Calu3 (cell line): ENCODE measurements at regions of chr2 and their contacts with region 1.

Region 1: GRCh38 chr2:16553226-16553625 is 112.4 kb downstream of the CYRIA start:
- DNase-seq: peak; percentile 49
- H3K4me3 Mint-ChIP-seq: no peak overlapping the region
- H3K27ac Mint-ChIP-seq: no peak overlapping the region
- H3K4me1 Mint-ChIP-seq: no peaks in the 10 kb centered on the region
- H3K27me3 Mint-ChIP-seq: peaks cover 67% of the 10 kb centered on the region
- CTCF ChIP-seq: peak; percentile 52

Region 2: DNA sequence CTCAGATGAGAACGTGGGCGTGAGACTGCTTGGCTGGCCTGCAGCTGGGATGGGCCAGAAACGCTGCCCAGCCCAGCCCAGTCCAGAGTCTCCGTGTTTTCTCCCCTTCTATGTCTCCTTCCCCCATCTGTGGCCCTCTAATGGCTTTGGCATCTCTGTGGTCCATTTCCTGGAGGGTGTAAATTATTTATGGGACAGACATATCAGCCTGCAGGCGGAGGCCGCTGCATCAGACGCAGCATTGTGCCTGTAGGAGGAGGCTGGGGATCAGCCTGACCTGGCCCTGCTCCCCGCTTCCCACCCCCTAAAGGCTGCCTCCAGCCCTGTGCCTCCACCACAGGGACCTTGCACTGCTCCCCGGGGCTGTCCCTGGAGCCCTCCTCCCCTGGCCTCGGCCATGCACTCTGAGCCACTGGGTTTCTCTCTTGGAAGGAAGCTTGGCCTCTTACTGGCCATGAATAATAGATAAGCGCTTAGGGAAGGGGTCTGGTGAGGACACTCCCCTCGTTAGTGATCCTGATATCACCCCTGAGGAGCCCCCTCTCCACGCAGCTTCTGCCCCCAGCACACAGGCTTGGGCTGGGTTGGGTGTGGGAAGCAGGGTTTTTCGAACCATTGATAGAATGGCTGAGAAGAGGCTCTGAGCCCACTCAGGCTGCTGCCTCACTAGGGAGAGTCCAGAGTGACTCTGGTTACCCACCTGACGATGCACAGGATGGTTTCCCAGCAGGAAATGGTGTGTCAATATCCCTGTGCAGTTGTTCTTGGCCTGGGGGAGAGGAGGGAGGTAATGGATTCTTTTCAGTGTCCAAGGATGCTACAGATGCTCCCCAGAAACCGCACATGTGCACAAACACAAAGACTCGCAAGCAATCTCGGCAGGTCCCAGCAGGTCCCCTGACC is 427.4 kb before region 1 on chr2:
- CTCF ChIA-PET with region 1: no interaction called
- intact Hi-C with region 1: no loop called
- DNase-seq: peak; percentile 34
- H3K4me3 Mint-ChIP-seq: no peak overlapping the region
- H3K27ac Mint-ChIP-seq: no peak overlapping the region
- H3K4me1 Mint-ChIP-seq: peaks cover 30% of the 10 kb centered on the region
- H3K27me3 Mint-ChIP-seq: no peaks in the 10 kb centered on the region
- CTCF ChIP-seq: no peak

Region 3: GRCh38 chr2:16756831-16757644 is 203.8 kb after region 1 on chr2:
- CTCF ChIA-PET with region 1: no interaction called
- intact Hi-C with region 1: loop called (anchors 1 kb)
- DNase-seq: peak; percentile 70
- H3K4me3 Mint-ChIP-seq: no peak overlapping the region
- H3K27ac Mint-ChIP-seq: no peak overlapping the region
- H3K4me1 Mint-ChIP-seq: no peaks in the 10 kb centered on the region
- H3K27me3 Mint-ChIP-seq: peaks cover 86% of the 10 kb centered on the region
- CTCF ChIP-seq: peak; percentile 90